ENCODE measurements at regions of chr5 and their contacts with region 1.

Region 1: DNA sequence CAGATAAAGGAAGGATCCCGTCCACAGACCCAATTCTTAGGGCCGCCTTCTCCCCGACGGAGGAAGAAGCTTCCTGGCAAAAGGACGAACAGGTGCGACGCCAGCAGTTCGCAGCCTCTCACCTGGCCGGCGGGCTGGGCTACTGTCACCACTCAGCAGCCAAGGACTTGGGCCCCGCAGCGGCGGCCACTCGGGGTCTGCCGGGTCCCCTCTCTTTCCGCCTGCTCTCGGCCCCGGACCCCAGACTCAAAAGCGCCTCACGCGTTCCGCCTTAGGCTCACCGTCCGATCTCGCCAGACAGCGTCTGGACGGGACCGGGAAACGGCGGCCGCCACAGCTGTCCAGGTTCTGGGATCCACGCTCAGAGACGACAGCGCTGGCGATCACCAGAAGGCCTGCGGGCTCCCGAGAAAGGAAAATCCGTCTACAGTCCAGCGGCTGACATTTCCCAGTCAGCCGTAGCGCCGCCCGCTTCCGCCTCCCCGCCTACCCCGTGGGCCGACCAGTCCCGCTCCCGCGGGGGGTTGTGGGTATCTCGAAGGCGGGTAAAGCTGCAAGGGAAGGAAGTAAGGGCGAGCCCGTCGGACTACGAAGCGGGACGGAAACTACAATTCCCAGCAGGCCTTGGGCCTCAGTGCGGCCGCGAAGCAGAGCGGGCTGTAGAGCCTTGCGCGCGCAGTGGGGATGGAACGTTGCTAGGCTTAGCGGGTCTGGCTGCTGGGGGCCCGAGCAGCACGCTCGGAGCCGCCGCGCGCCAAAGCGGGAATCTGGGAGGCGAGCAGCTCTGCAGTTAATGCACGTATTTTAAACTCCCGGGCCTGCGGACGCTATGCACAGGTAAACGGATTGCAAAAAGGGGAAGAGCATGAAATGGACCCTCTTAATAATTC is at the starts of genes LMBRD2 and SKP2:
- DNase-seq: peak; percentile 98
- H3K4me3 ChIP-seq: peak within 1 kb of the TSS; percentile 98
- H3K4me3 Mint-ChIP-seq: peak within 1 kb of the TSS; percentile 75
- H3K27ac Mint-ChIP-seq: peak within 1 kb of the TSS; percentile 85
- H3K4me1 ChIP-seq: peaks cover 59% of the 10 kb centered on the region
- H3K4me1 Mint-ChIP-seq: peaks cover 54% of the 10 kb centered on the region
- H3K27me3 ChIP-seq: no peaks in the 10 kb centered on the region
- H3K27me3 Mint-ChIP-seq: no peaks in the 10 kb centered on the region
- CTCF ChIP-seq: no peak
- total RNA-seq, gene LMBRD2: 11.5 and 15.2 TPM in 2 replicates
- total RNA-seq, gene SKP2: 192 and 230 TPM in 2 replicates

Region 2: DNA sequence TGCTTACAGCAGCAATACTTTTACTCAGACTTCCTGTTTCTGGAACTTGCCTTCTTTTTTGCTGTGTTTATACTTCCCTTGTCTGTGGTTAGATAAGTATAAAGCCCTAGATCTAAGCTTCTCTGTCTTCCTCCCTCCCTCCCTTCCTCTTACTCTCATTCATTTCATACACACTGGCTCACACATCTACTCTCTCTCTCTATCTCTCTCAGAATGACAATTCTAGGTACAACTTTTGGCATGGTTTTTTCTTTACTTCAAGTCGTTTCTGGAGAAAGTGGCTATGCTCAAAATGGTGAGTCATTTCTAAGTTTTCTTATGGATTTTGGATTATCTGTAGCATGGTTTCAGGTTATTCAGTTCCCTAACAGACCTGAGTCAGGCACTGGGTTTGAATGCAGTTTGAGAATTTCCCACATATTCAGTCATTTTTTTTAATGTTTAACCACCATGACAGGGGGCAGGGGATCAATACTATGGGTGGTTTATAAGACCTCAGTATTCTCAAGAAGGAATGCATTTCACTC is 294.9 kb before region 1 on chr5 and contains the start of gene IL7R:
- CTCF ChIA-PET with region 1: no interaction called
- POLR2A ChIA-PET with region 1: no interaction called
- intact Hi-C with region 1: no loop called
- DNase-seq: no peak
- H3K4me3 ChIP-seq: no peak within 1 kb of the TSS
- H3K4me3 Mint-ChIP-seq: no peak within 1 kb of the TSS
- H3K27ac Mint-ChIP-seq: no peak within 1 kb of the TSS
- H3K4me1 ChIP-seq: no peaks in the 10 kb centered on the region
- H3K4me1 Mint-ChIP-seq: no peaks in the 10 kb centered on the region
- H3K27me3 ChIP-seq: no peaks in the 10 kb centered on the region
- H3K27me3 Mint-ChIP-seq: peaks cover 2% of the 10 kb centered on the region
- CTCF ChIP-seq: no peak
- total RNA-seq, gene IL7R: not detected in 2 replicates

Region 3: DNA sequence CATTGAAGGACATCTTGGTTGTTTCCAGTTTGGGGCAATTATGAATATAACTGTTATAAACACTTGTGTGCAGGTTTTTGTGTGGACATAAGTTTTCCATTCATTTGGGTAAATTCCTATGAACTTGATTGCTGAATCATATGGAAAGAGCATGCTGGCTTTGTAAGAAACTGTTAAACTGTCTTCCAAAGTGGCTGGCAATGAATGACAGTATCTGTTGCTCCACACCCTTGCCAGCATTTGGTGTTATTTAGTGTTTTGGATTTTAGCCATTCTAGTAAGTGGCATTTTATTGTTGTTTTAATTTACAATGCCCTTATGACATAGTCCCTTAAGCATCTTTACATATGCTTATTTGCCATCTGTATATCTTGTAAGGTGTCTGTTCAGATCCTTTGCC is 55.2 kb before region 1 on chr5:
- CTCF ChIA-PET with region 1: no interaction called
- POLR2A ChIA-PET with region 1: no interaction called
- intact Hi-C with region 1: no loop called
- DNase-seq: no peak
- H3K4me3 ChIP-seq: no peak overlapping the region
- H3K4me3 Mint-ChIP-seq: no peak overlapping the region
- H3K27ac Mint-ChIP-seq: no peak overlapping the region
- H3K4me1 ChIP-seq: no peaks in the 10 kb centered on the region
- H3K4me1 Mint-ChIP-seq: no peaks in the 10 kb centered on the region
- H3K27me3 ChIP-seq: no peaks in the 10 kb centered on the region
- H3K27me3 Mint-ChIP-seq: no peaks in the 10 kb centered on the region
- CTCF ChIP-seq: no peak

Region 4: GRCh38 chr5:36125868-36126267 is 25.8 kb before region 1 on chr5:
- CTCF ChIA-PET with region 1: no interaction called
- POLR2A ChIA-PET with region 1: interaction called, 3 read pairs
- intact Hi-C with region 1: loop called (anchors 2 kb)
- DNase-seq: peak in 1 of 2 experiments; percentile 21
- H3K4me3 ChIP-seq: no peak overlapping the region
- H3K4me3 Mint-ChIP-seq: no peak overlapping the region
- H3K27ac Mint-ChIP-seq: peak overlapping the region; percentile 68
- H3K4me1 ChIP-seq: peaks cover 23% of the 10 kb centered on the region
- H3K4me1 Mint-ChIP-seq: peaks cover 11% of the 10 kb centered on the region
- H3K27me3 ChIP-seq: no peaks in the 10 kb centered on the region
- H3K27me3 Mint-ChIP-seq: no peaks in the 10 kb centered on the region
- CTCF ChIP-seq: no peak

Region 5: DNA sequence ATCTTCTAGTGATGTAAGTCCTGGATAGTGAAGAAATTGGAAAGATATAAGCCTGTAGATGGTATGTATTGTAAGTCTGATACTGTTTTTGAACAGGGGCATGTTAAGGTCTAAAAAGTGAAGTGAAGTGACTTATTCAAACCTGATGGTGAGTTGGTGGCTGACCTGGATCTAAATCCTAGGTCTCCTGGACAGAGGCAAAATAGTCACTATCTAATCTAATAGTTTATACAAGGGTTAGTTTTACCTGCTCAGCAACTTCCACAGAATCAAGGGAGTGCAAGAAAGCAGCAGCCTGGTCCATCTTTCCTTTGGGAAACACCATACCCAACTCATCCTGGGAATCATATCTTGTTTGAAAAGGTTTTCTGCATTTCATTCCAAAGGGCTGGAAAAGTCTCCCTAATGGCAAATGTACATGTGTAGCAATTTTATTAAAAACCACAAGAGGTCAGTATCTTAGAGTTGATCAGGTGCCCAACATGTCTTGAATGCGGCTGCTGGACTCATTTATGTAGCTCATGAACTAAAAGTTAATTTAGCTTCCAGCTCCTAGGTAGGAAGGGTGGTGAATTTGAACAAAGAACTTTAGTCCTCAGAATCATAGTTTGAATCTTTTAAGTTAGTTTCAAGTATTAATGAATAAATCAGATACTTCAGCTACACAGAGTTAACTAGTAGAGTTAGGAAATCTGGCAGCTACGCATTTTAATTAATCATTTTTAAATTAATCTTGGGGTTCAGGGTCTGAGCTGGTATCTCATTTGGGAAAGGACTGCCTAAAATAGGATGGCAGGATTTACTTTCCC is 26.2 kb after region 1 on chr5:
- CTCF ChIA-PET with region 1: interaction called, 3 read pairs
- POLR2A ChIA-PET with region 1: no interaction called
- intact Hi-C with region 1: loop called (anchors 2 kb)
- DNase-seq: peak in 1 of 2 experiments; percentile 24
- H3K4me3 ChIP-seq: no peak overlapping the region
- H3K4me3 Mint-ChIP-seq: no peak overlapping the region
- H3K27ac Mint-ChIP-seq: no peak overlapping the region
- H3K4me1 ChIP-seq: peaks cover 27% of the 10 kb centered on the region
- H3K4me1 Mint-ChIP-seq: peaks cover 44% of the 10 kb centered on the region
- H3K27me3 ChIP-seq: no peaks in the 10 kb centered on the region
- H3K27me3 Mint-ChIP-seq: no peaks in the 10 kb centered on the region
- CTCF ChIP-seq: peak; percentile 50 to 61

Region 6: GRCh38 chr5:36344900-36345299 is 193.2 kb after region 1 on chr5:
- CTCF ChIA-PET with region 1: no interaction called
- POLR2A ChIA-PET with region 1: no interaction called
- intact Hi-C with region 1: no loop called
- DNase-seq: no peak
- H3K4me3 ChIP-seq: no peak overlapping the region
- H3K4me3 Mint-ChIP-seq: no peak overlapping the region
- H3K27ac Mint-ChIP-seq: no peak overlapping the region
- H3K4me1 ChIP-seq: no peaks in the 10 kb centered on the region
- H3K4me1 Mint-ChIP-seq: peaks cover 6% of the 10 kb centered on the region
- H3K27me3 ChIP-seq: no peaks in the 10 kb centered on the region
- H3K27me3 Mint-ChIP-seq: no peaks in the 10 kb centered on the region
- CTCF ChIP-seq: no peak